ENCODE measurements at regions of chr20 and their contacts with region 1.

Region 1: DNA sequence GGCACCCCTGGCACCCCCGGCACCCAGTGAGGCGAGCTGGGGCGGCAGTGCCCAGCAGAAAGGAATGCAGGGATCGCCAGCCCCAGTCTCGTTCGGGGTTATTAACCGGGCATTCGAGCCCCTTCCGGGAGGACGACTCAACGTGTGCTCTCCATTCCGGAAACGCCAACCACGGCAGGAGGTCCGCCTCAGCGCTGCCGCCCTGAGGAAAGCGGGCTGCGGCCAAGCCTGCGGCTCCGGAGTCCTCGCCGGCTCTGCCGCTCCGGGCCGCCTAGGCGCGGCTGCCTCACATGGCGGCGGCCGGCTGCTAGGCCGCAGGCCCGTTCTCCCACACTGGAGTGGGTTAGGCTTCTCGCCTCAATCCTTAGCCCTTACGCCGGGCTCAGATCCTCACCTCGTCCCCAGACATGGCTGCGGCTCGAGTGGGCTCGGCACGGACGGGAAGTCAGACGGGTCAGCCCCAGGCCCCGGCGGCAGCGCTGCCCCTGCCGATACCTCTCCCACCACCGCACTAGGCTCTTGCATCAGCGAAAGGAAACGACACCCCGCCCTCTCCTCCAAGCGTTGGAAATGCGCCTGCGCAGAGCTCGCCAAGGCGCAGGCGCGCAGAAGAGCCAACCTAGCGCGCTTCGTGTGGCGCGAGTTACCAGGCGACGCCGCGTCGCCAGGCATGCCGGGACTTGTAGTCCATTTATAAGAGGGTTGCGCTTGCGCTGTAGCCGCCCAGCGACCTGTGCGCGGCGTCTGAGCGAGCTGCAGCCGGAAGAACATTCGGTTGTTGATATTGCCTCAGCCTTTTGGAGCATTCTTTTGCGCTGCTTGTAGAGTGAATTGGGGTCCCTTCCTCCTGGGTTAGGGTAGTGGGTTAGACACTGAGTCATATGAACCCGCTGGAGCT is at the start of gene EIF2S2:
- DNase-seq: peak; percentile 90 to 99
- H3K4me3 ChIP-seq: peak within 1 kb of the TSS; percentile 96 to 99 (median 98)
- H3K27ac ChIP-seq: peak within 1 kb of the TSS; percentile 99
- H3K4me1 ChIP-seq: peaks cover 0 to 6% (median 0%) of the 10 kb centered on the region in 4 experiments; a peak in 3 of 7 replicates
- H3K27me3 ChIP-seq: no peaks in the 10 kb centered on the region
- CTCF ChIP-seq: no peak
- EP300 ChIP-seq: no peak
- POLR2A ChIP-seq: peak; percentile 95 to 96
- RAD21 ChIP-seq: no peak
- total RNA-seq, gene EIF2S2: 133 and 142 TPM in 2 replicates

Region 2: GRCh38 chr20:33992923-33993575 is 118.9 kb before region 1 on chr20:
- CTCF ChIA-PET with region 1: no interaction called
- POLR2A ChIA-PET with region 1: interaction called, 21 read pairs
- DNase-seq: peak; percentile 97 to 99
- H3K4me3 ChIP-seq: peak overlapping the region; percentile 91 to 92 (median 92)
- H3K27ac ChIP-seq: peak overlapping the region; percentile 99
- H3K4me1 ChIP-seq: peaks cover 1 to 11% (median 5%) of the 10 kb centered on the region in 4 experiments; a peak in 5 of 7 replicates
- H3K27me3 ChIP-seq: no peaks in the 10 kb centered on the region
- CTCF ChIP-seq: no peak
- EP300 ChIP-seq: no peak
- POLR2A ChIP-seq: peak; percentile 75 to 97
- RAD21 ChIP-seq: no peak

Region 3: GRCh38 chr20:34083137-34083536 is 28.8 kb before region 1 on chr20:
- CTCF ChIA-PET with region 1: no interaction called
- POLR2A ChIA-PET with region 1: interaction called, 236 read pairs
- DNase-seq: no peak
- H3K4me3 ChIP-seq: no peak overlapping the region
- H3K27ac ChIP-seq: no peak overlapping the region
- H3K4me1 ChIP-seq: no peaks in the 10 kb centered on the region
- H3K27me3 ChIP-seq: no peaks in the 10 kb centered on the region
- CTCF ChIP-seq: no peak
- EP300 ChIP-seq: no peak
- POLR2A ChIP-seq: no peak
- RAD21 ChIP-seq: no peak; a peak in 1 of 4 replicates

Region 4: DNA sequence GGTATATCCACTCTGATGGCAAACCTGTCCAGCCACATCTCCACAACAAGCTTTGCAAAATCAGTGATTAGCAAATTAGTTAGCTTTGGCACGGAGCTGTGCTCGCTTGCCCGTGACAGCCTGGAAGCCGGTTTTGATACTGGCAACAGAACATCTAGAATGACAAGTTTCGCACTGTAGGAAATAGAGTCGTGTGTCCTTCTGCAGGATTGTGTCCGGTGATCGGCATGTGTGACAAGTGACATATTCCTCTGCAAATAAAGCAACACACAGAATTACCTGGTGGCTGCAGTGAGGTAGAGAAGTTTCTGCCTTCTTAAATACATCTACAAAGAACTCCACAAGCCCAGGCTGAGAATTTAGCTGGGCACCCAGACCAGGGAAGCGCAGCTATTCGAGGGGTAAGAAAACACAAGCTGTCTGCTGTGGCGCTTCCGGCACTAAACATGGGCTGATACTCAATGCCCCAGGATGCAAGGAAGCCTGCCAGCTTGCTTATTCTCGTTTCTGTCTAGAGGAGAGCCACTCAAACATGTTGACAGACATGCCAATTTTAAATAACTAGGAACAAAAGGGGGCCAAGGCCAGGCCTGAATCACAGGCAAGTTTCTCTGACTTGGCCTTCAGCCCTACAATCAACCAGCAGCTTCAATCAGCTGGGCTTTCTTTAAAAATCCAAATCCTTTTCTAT is 22.2 kb before region 1 on chr20:
- CTCF ChIA-PET with region 1: interaction called, 3 read pairs
- POLR2A ChIA-PET with region 1: interaction called, 236 read pairs
- DNase-seq: no peak
- H3K4me3 ChIP-seq: no peak overlapping the region
- H3K27ac ChIP-seq: no peak overlapping the region
- H3K4me1 ChIP-seq: no peaks in the 10 kb centered on the region
- H3K27me3 ChIP-seq: no peaks in the 10 kb centered on the region
- CTCF ChIP-seq: no peak
- EP300 ChIP-seq: no peak
- POLR2A ChIP-seq: no peak
- RAD21 ChIP-seq: no peak

Region 5: DNA sequence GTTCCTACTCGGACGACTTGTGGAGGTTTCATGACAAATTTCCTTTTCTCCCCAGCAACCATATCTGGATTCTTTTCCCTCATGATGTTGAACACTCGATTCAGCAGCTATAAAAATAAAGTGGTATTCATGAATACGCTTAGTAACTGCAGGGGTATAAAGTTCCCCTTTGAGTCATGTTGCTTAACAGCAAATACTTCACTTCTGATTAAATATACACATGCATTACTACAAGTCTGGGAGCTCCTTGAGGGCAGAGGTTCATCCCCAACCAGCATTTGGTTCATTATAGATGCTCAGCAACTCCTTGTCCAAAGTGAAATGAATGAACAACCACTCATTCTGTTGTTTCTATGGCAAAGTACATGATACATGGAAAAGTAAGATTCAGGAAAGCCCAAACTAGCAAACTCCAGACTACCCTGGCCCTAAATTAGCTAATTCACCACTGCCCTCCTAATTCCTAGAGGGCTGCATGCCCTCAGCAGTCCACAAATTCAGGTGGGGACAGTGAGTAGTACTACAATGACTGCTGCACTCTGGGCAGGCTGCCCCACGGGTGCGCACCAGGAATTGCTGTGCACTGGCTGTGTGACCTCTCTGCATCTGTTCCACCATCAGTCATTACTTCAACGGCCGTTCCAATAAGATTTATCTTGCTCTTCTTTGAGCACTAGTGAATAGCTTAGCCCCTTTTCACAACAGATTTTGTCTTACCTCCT is 15.1 kb before region 1 on chr20:
- CTCF ChIA-PET with region 1: interaction called, 3 read pairs
- POLR2A ChIA-PET with region 1: interaction called, 236 read pairs
- DNase-seq: no peak
- H3K4me3 ChIP-seq: no peak overlapping the region
- H3K27ac ChIP-seq: no peak overlapping the region
- H3K4me1 ChIP-seq: no peaks in the 10 kb centered on the region
- H3K27me3 ChIP-seq: no peaks in the 10 kb centered on the region
- CTCF ChIP-seq: no peak
- EP300 ChIP-seq: no peak
- POLR2A ChIP-seq: 0 out of 3 replicates have a peak, but pooled peaks of 1 of the 2 experiments have one; percentile 20
- RAD21 ChIP-seq: no peak

Region 6: DNA sequence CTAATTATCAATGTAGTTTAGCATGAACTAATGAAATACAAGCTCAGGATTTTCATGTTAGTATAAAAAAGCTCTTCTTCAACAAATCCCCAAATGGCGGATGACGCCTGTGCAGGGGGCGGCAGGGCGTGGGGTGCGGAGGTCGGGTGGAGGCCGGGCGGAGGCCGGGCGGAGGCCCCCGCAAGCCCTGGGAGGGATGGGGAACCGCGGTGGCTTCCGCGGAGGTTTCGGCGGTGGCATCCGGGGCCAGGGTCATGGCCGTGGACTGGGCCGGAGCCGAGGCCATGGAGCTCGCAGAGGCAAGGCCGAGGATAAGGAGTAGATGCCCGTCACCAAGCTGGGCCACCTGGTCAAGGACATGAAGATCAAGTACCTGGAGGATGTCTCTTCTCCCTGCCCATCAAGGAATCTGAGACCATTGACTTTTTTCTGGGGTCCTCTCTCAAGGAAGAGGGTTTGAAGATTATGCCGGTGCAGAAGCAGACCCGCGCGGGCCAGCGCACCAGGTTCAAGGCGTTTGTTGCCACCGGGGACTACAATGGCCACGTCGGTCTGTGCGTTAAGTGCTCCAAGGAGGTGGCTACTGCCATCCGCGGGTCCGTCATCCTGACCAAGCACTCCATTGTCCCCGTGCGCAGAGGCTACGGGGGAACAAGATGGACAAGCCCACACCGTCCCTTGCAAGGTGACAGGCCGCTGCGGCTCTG is 10.5 kb after region 1 on chr20:
- CTCF ChIA-PET with region 1: no interaction called
- POLR2A ChIA-PET with region 1: interaction called, 14 read pairs
- DNase-seq: no peak
- H3K4me3 ChIP-seq: no peak overlapping the region
- H3K27ac ChIP-seq: no peak overlapping the region
- H3K4me1 ChIP-seq: no peaks in the 10 kb centered on the region
- H3K27me3 ChIP-seq: peaks cover 0 to 3% (median 0%) of the 10 kb centered on the region in 4 experiments; a peak in 1 of 7 replicates
- CTCF ChIP-seq: no peak
- EP300 ChIP-seq: no peak
- POLR2A ChIP-seq: no peak
- RAD21 ChIP-seq: no peak

Region 7: DNA sequence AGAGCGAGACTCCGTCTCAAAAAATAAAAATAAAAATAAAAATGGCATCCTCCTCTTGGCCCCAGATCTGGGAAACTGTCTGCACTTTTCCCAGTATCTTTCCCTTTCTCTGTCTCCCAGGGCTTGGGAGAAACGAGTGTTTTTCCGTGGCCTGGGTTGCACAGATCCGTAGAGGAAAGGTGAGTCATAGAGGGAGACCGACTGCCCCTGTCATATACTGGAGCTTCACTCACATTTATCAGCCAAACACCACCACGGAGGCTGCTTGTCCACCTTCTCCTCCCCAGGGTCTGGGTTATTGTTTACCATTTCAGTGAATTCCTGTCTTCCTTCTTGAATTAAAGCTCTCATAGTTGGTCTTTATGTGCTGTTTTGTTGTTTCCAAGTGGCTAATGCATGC is 32.0 kb after region 1 on chr20:
- CTCF ChIA-PET with region 1: no interaction called
- POLR2A ChIA-PET with region 1: no interaction called
- DNase-seq: no peak
- H3K4me3 ChIP-seq: no peak overlapping the region
- H3K27ac ChIP-seq: no peak overlapping the region
- H3K4me1 ChIP-seq: no peaks in the 10 kb centered on the region
- H3K27me3 ChIP-seq: no peaks in the 10 kb centered on the region
- CTCF ChIP-seq: no peak
- EP300 ChIP-seq: no peak
- POLR2A ChIP-seq: no peak
- RAD21 ChIP-seq: no peak